Right ventricle myocardium superior (tissue), 1 donor: ENCODE measurements at regions of chr17 and their contacts with region 1.

Region 1: DNA sequence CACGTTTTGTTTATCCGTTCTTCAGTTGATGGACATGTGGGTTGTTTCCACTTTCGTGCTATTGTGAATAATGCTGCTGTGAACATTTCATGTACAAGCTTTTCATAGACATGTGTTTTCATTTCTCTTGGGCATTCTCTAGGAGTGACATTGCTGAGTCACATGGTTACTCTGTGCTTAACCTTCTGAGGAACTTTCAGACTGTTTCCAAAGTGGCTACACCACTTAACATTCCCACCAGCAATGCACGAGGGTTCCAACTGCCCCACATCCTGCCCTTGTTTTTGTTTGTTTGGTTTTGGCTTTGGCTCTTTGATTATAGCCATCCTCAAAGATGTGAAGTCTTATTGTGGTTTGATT is 14.2 kb upstream of the PEMT start:
- DNase-seq: no peak
- ATAC-seq: peak; percentile 58

Region 2: GRCh38 chr17:17568749-17569195 is 36.9 kb before region 1 on chr17:
- intact Hi-C with region 1: loop called (anchors 5 kb)
- DNase-seq: peak; percentile 86
- ATAC-seq: peak; percentile 54